Calu3 (cell line): ENCODE measurements at regions of chr4 and their contacts with region 1.

Region 1: GRCh38 chr4:122458625-122459024 is 2.1 kb upstream of the IL2 start:
- DNase-seq: peak; percentile 14
- H3K4me3 Mint-ChIP-seq: peak overlapping the region; percentile 53
- H3K27ac Mint-ChIP-seq: no peak overlapping the region
- H3K4me1 Mint-ChIP-seq: no peaks in the 10 kb centered on the region
- H3K27me3 Mint-ChIP-seq: no peaks in the 10 kb centered on the region
- CTCF ChIP-seq: no peak

Region 2: GRCh38 chr4:122309988-122310626 is 148.5 kb before region 1 on chr4:
- CTCF ChIA-PET with region 1: no interaction called
- intact Hi-C with region 1: loop called (anchors 10 kb)
- DNase-seq: no peak
- H3K4me3 Mint-ChIP-seq: no peak overlapping the region
- H3K27ac Mint-ChIP-seq: no peak overlapping the region
- H3K4me1 Mint-ChIP-seq: no peaks in the 10 kb centered on the region
- H3K27me3 Mint-ChIP-seq: no peaks in the 10 kb centered on the region
- CTCF ChIP-seq: no peak

Region 3: DNA sequence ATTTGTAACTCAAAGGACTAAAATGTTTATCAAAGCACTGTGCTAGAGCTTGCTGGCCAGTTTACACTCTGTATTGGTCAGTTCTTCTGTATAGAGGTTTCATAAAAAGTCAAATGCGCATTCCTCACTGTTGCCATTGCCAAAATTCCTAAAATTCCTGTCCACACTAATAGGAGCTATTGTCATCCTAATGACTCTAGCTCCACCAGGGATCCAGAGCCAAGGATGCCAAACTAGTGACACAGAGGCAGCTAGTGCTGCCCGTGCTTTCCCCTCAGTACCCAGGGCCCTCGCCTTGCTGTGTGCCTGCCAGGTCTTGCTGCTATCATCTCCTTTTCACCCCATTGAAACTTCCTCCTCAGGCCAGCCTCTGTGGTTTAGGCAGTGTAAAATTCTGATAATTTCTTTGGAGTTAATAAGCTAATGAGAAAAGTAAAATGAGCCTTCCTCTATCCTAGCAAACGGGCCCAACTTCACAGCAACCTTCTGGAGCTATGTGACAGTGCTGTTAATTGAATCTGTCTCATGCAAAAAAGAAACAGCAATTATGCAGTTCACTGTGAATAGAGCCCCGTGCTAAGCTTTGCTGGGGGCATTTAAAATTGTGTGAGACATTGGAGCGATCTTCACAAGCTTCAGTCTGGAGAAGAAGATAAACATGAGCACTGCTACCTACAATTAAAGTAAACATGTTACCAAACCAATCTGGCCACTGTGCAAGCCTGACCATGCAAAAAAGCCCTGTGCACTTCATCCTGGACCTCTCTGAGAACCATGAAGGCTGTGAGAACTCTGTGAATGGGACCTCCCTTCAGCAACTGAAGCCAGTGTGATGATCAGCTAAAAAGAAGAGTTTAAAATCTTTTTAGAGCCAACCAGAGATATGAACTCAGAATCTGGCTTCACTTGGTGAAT is 324.9 kb after region 1 on chr4:
- CTCF ChIA-PET with region 1: no interaction called
- intact Hi-C with region 1: no loop called
- DNase-seq: peak; percentile 70
- H3K4me3 Mint-ChIP-seq: peak overlapping the region; percentile 2
- H3K27ac Mint-ChIP-seq: peak overlapping the region; percentile 85
- H3K4me1 Mint-ChIP-seq: peaks cover 38% of the 10 kb centered on the region
- H3K27me3 Mint-ChIP-seq: no peaks in the 10 kb centered on the region
- CTCF ChIP-seq: no peak